ENCODE measurements at regions of chr2 and their contacts with region 1.

Region 1: GRCh38 chr2:187453078-187453641 is 5.1 kb upstream of the CALCRL start:
- DNase-seq: no peak
- ATAC-seq: no peak
- H3K4me3 ChIP-seq: no peak overlapping the region
- H3K4me1 ChIP-seq: no peaks in the 10 kb centered on the region
- CTCF ChIP-seq: no peak

Region 2: GRCh38 chr2:186862869-186863709 is 590.1 kb before region 1 on chr2:
- intact Hi-C with region 1: loop called (anchors 10 kb)
- DNase-seq: no peak
- ATAC-seq: no peak
- H3K4me3 ChIP-seq: no peak overlapping the region
- H3K4me1 ChIP-seq: no peaks in the 10 kb centered on the region
- CTCF ChIP-seq: peak; percentile 23